OCI-LY7 (cell line): ENCODE measurements at regions of chr1 and their contacts with region 1.

Region 1: DNA sequence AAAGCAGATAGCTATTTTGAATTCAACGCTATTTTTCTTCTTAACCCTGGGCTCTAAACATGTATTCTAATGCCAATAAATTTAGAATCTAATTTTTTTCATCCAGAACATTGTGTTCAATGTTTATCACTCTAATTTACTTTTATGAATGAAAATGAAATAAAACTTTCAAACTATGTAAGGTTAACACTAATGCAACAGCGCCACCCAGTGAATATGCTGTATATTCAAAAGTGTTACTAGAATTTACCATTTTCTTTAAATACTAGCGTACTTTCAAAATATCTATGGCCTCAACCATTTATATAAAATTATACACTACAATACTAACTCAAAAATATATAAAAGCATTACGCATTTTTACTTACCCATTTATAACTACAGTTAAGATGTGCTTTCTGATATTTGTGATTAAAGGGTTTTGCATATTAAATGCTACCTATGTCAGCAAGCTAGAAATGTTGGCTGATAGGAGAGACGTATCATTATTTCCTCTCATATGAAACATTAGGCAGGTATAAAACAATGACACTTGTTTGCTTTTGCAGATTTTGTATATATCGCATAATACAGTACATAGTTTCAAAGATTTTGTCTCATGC is 5.9 kb upstream of the NUF2 start:
- DNase-seq: peak; percentile 62
- H3K4me3 ChIP-seq: no peak overlapping the region
- H3K27ac ChIP-seq: no peak overlapping the region
- H3K4me1 ChIP-seq: peaks cover 6% of the 10 kb centered on the region
- CTCF ChIP-seq: peak; percentile 98

Region 2: DNA sequence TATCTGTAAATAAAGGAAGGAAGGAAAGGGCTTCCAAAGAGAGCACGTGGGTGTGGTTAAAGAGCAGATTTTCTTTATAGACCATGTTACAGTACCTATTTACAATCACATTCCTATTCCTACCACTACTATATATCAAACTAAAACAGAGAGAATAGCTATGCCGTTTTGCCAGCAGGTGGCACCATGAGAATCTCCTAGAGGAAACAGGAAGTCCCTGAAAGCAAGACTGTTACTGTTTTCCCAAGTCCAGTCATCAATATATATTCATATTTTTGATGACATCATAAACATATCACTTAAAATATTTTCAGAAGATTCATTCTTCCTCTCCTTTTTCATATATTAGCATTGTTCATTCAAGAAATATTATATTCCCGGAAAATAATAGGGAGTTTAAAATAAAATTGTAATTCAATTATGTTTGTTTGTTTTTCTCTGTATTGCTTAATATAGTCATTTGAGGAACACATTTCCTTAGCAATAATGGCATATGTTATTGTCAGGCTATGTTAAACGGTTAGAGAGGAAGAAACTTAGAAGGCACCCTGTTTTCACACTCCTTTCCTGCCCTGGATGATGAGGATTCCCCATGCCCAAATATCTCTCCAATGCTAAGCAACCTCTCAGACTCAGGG is 461.5 kb before region 1 on chr1:
- CTCF ChIA-PET with region 1: no interaction called
- POLR2A ChIA-PET with region 1: no interaction called
- intact Hi-C with region 1: loop called (anchors 2 kb)
- DNase-seq: peak; percentile 69
- H3K4me3 ChIP-seq: no peak overlapping the region
- H3K27ac ChIP-seq: no peak overlapping the region
- H3K4me1 ChIP-seq: no peaks in the 10 kb centered on the region
- CTCF ChIP-seq: peak; percentile 96

Region 3: DNA sequence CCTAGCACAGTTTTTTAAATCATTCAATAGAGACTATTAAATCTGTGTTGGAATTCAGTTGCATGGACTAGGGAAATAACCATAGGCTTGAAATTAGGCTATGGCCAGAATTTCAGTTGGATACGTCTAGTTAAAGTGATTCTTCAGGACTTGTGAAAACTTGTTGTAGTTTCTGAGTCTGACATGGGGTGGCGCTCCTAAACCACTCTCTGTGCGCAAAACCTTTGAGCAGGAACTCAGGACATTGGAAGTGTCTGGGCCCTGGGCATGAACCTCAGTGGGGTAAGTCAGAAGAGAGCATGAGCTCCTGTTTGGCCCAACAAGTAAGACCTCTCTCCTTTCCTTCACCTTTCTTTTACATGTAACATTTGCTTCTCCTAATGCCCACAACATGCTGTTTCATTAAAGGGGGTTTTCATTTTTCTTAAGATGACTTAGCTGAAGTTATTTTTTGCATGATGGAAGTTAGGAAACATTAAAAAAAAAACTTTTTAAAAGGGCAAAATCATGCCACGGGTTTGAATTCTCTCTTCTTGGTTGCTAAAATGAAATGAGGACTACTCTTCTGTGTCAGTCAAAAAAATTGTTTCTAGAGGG is 437.8 kb before region 1 on chr1:
- CTCF ChIA-PET with region 1: no interaction called
- POLR2A ChIA-PET with region 1: no interaction called
- intact Hi-C with region 1: loop called (anchors 1 kb)
- DNase-seq: peak; percentile 3
- H3K4me3 ChIP-seq: no peak overlapping the region
- H3K27ac ChIP-seq: no peak overlapping the region
- H3K4me1 ChIP-seq: no peaks in the 10 kb centered on the region
- CTCF ChIP-seq: peak; percentile 69

Region 4: GRCh38 chr1:163054181-163054591 is 261.7 kb before region 1 on chr1:
- CTCF ChIA-PET with region 1: no interaction called
- POLR2A ChIA-PET with region 1: no interaction called
- intact Hi-C with region 1: no loop called
- DNase-seq: no peak
- H3K4me3 ChIP-seq: no peak overlapping the region
- H3K27ac ChIP-seq: no peak overlapping the region
- H3K4me1 ChIP-seq: no peaks in the 10 kb centered on the region
- CTCF ChIP-seq: no peak

Region 5: DNA sequence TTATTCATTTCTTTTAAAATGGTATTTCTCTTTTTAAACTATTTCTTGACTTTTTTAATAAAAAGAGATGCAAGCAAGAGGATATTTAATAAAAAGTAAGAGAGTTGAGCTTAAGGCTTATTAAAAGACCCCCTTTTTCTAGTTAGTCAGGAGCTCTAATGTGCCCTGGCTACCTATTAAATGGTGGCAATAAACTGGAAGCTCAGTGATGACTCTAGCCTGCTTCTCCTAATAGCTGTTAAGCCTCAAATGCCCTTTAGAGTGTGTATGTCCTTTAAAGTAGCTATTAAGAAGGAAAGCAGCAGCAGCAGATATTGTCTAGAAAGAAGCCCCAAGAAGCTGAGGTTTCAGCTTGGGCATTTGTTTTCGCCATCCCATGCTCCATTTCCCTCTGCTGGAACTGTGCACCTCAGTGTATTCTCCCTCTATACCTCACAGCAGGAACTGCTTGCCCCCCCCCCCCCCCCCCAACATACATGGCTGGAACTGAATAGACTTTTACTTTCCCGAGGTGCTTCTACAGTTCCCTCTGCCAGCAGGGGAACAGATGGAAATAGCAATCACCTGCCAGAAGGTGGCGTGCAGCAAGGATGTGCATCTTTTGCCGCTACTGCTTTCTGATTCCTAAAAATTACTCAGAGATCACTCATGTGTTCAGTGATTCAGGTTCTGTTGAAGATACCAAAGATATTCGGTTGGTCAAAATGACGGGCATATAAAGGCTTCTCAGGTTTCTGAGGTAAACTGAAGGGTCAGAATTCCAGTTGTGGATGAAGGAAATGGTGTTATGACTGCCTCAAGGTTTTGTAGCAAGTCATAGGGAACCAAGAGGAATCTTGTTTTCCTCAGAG is 244.2 kb before region 1 on chr1:
- CTCF ChIA-PET with region 1: no interaction called
- POLR2A ChIA-PET with region 1: no interaction called
- intact Hi-C with region 1: loop called (anchors 1 kb)
- DNase-seq: peak; percentile 43
- H3K4me3 ChIP-seq: no peak overlapping the region
- H3K27ac ChIP-seq: no peak overlapping the region
- H3K4me1 ChIP-seq: no peaks in the 10 kb centered on the region
- CTCF ChIP-seq: peak; percentile 74

Region 6: GRCh38 chr1:163174524-163175437 is 141.1 kb before region 1 on chr1:
- CTCF ChIA-PET with region 1: no interaction called
- POLR2A ChIA-PET with region 1: no interaction called
- intact Hi-C with region 1: loop called (anchors 5 kb)
- DNase-seq: peak; percentile 44
- H3K4me3 ChIP-seq: no peak overlapping the region
- H3K27ac ChIP-seq: no peak overlapping the region
- H3K4me1 ChIP-seq: no peaks in the 10 kb centered on the region
- CTCF ChIP-seq: peak; percentile 93

Region 7: DNA sequence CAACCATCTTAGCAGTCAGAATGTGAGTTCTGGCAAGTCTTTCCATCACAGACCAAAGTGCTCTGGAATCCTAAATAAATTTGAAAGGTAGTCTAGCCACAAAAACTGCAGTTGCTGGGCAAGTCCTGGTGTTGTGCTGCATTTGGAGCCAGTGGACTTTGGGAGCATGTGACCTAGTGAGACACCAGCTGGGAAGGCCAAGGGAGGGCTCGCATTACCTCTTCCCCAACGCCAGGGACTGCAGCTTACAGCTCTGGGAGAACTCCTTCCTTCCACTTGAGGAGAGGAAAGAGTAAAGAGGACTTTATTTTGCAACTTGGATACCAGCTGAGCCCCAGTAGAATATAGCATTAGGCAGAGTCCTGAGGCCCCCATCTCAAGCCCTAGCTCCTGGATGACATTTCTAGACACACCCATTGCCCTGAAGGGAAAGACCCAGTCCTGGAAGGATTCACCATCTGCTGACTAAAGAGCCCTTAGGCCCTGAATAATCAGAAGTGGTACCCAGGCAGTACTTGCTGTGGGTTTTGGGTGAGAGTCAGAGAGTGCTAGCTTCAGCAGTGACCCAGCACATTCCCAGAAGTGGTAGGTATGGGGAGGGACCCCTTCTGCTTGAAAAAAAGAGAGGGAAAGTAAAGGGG is 196.6 kb after region 1 on chr1:
- CTCF ChIA-PET with region 1: no interaction called
- POLR2A ChIA-PET with region 1: no interaction called
- intact Hi-C with region 1: no loop called
- DNase-seq: no peak
- H3K4me3 ChIP-seq: no peak overlapping the region
- H3K27ac ChIP-seq: no peak overlapping the region
- H3K4me1 ChIP-seq: no peaks in the 10 kb centered on the region
- CTCF ChIP-seq: no peak